ENCODE measurements at regions of chr14 and their contacts with region 1.

Region 1: DNA sequence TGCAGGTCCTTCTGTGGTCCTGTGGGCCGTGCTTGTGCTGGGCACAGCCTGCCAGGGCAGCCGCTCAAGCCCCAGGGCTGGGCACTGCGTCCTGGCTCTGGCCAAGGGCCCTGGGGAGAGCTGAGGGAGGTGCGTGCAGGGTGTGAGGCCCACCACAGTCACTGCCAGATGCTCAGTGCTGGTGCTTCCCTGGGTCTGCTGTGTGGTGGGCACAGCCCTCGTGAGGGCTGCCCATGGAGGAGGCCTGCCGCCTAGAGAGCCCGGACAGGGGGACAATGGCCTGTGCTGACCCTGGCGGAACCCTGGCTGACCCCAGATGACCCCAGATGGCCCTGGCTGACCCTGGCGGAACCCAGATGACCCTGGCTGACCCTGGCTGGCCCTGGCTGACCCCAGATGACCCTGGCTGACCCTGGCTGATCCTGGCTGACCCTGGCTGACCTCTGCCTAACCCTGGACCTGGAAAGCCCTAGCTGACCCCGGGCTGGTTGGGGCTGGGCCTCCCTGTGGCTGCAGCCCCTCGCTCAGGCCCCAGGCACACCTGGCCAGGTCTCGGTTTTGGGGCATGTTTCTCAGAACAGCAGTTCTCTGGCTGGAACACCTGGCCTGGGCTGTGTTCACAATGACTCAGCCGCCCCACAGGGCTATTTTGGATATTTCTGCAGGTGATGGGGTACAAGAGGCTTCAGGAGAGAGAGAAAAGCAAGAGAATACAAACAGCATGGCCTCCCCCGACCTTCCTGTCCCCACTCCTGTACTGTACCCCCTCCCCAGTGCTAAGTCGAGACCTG is 55.4 kb downstream of the TMEM121 start:
- DNase-seq: peak in 1 of 6 donors; percentile 45
- ATAC-seq: no peak
- H3K4me3 ChIP-seq: no peak overlapping the region
- H3K27ac ChIP-seq: no peak overlapping the region
- H3K4me1 ChIP-seq: no peaks in the 10 kb centered on the region
- H3K27me3 ChIP-seq: no peaks in the 10 kb centered on the region
- CTCF ChIP-seq: no peak

Region 2: DNA sequence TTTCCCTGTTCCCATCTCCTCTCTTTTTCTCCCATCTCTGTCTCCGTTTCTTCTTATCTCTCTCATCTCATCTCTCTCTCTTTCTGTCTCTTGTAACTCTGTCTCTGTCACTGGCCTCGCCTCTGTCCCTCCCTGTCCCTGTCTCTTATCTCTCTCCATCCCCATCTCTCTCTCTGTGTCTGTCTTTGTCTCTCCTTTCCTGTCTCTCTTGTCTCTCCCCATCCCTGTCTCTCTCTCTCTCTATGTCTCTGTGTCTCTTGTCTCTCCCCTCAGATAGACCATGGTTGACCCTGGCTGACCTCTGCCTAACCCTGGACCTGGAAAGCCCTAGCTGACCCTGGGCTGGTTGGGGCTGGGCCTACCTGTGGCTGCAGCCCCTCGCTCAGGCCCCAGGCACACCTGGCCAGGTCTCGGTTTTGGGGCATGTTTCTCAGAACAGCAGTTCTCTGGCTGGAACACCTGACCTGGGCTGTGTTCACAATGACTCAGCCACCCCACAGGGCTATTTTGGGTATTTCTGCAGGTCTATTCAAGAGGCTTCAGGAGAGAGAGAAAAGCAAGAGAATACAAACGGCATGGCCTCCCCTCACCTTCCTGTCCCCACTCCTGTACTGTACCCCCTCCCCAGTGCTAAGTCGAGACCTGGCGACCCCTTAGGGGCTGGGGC is 119.0 kb after region 1 on chr14:
- intact Hi-C with region 1: loop called (anchors 5 to 10 kb)
- DNase-seq: peak in 2 of 6 donors; percentile 15 to 22
- ATAC-seq: no peak
- H3K4me3 ChIP-seq: no peak overlapping the region
- H3K27ac ChIP-seq: no peak overlapping the region
- H3K4me1 ChIP-seq: no peaks in the 10 kb centered on the region
- H3K27me3 ChIP-seq: no peaks in the 10 kb centered on the region
- CTCF ChIP-seq: no peak